ENCODE measurements at regions of chr22 and their contacts with region 1.

Region 1: GRCh38 chr22:41091132-41092022 is 1.0 kb upstream of the EP300 start:
- DNase-seq: peak; percentile 99 to 100
- ATAC-seq: peak; percentile 93 to 97 (median 96)
- H3K4me3 ChIP-seq: peak overlapping the region; percentile 98
- H3K27ac ChIP-seq: peak overlapping the region; percentile 100
- H3K4me1 ChIP-seq: peaks cover 26% of the 10 kb centered on the region
- H3K27me3 ChIP-seq: no peaks in the 10 kb centered on the region
- CTCF ChIP-seq: no peak

Region 2: GRCh38 chr22:40950962-40951794 is 140.2 kb before region 1 on chr22 and contains the start of gene RBX1:
- intact Hi-C with region 1: loop called (anchors 1 kb)
- DNase-seq: peak; percentile 97 to 99
- ATAC-seq: peak; percentile 95 to 96 (median 95)
- H3K4me3 ChIP-seq: peak within 1 kb of the TSS; percentile 95
- H3K27ac ChIP-seq: peak within 1 kb of the TSS; percentile 98
- H3K4me1 ChIP-seq: peaks cover 19% of the 10 kb centered on the region
- H3K27me3 ChIP-seq: no peaks in the 10 kb centered on the region
- CTCF ChIP-seq: no peak
- total RNA-seq, gene RBX1: 46.6 to 59.9 (median 54.3) TPM

Measured in psoas muscle (tissue), 8 donors.